AG04449 (cell line): ENCODE measurements at regions of chr3 and their contacts with region 1.

Region 1: GRCh38 chr3:14508961-14509795 is 31.0 kb downstream of the GRIP2 start:
- DNase-seq: no peak
- H3K4me3 ChIP-seq: peak overlapping the region; percentile 12; the same call in 1 of the 2 replicates
- CTCF ChIP-seq: peak; percentile 91

Region 2: DNA sequence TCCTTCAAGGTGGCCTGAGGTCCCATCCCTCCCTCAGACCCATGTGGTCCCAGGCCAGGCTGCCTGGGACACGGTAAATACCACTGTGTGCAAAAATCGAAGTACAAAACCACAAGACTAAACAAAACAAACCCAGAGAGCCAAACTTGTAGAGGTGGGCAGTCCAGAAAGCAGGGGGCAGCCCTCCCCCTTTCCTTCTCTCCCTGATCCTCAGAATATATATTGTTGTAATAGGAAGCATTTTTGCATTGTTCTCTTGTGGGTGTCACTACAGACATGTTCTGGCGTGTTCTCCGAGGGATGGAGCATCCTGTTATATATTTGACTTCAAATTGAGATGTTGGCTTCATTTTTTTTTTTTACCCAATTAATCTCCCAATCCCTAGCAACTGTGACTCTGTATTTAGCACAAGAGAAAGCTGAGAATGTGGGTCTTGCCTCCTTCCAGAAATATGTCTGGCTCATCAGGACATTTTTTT is 20.6 kb before region 1 on chr3:
- CTCF ChIA-PET with region 1: interaction called, 17 read pairs
- POLR2A ChIA-PET with region 1: interaction called, 3 read pairs
- DNase-seq: no peak
- H3K4me3 ChIP-seq: no peak overlapping the region
- CTCF ChIP-seq: no peak

Region 3: GRCh38 chr3:14497321-14497720 is 11.9 kb before region 1 on chr3:
- CTCF ChIA-PET with region 1: interaction called, 71 read pairs
- POLR2A ChIA-PET with region 1: interaction called, 3 read pairs
- DNase-seq: no peak
- H3K4me3 ChIP-seq: no peak overlapping the region
- CTCF ChIP-seq: no peak

Region 4: DNA sequence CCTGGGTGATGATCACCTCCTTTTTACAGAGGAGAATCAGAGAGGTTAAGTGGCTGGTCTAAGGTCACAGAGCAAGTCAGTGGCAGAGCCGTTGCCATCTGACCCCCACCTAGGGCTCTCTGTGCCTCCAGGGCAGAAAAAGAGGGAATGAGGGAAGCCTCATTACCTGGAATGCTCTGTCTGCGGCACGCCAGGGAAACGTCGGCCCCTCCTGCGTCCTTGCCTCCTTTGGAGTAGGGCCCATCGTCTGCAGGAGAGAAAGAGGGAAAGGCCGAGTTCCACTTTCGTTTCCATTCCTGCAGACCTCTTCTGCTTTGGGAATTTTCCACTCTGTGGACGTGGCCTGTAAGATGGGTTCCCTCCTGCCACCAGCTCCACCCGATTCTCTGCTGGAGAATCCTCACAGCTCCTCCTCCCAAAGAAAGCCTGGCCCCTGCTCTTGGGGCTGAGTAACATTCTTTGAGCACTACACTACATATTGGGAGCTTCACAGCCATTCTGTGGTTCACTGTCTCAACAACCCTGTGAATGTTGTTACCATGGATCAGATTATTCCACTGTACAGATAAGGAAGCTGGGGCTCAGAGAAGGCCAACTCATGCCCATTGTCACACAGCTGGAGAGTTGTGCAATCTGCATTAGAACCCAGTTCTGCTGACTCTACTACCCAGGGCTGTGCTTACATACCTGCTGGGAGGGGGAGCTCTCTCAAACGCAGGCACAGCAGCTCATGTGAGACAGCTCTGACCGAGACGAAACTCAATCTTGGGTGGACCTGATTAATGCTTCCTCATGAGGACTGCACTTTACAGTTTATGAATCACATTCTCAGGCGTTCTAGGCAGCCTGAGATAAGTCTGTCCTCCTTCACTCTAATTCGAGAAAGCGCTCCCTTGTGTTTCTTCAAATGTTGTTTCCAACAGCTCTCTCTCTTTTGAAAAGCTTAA is 16.8 kb after region 1 on chr3:
- CTCF ChIA-PET with region 1: interaction called, 167 read pairs
- POLR2A ChIA-PET with region 1: no interaction called
- DNase-seq: peak; percentile 10
- H3K4me3 ChIP-seq: no peak overlapping the region
- CTCF ChIP-seq: no peak

Region 5: GRCh38 chr3:14537590-14538447 is 28.6 kb after region 1 on chr3:
- CTCF ChIA-PET with region 1: interaction called, 14 read pairs
- POLR2A ChIA-PET with region 1: no interaction called
- DNase-seq: no peak
- H3K4me3 ChIP-seq: no peak overlapping the region
- CTCF ChIP-seq: no peak

Region 6: DNA sequence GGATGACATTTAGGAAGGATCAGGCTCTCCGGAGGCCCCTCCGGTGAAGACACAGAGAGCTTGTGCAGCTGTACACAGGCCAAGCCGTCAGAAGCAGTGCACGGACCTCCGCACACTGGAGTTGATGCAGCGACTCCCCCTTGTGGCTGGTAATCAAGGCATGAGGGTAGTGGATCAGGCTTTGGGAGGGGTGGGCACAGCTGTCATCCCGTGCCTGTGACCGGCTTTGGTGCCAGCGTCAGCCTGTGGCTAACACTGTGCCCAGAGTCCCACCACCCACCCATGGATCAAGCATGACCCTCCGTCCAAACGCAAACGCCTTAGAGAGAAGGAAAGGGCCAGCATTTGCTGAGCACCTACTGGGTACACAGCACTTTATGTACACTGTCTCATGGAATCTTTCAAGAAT is 39.1 kb after region 1 on chr3:
- CTCF ChIA-PET with region 1: interaction called, 81 read pairs
- POLR2A ChIA-PET with region 1: no interaction called
- DNase-seq: no peak
- H3K4me3 ChIP-seq: no peak overlapping the region
- CTCF ChIP-seq: peak; percentile 86

Region 7: DNA sequence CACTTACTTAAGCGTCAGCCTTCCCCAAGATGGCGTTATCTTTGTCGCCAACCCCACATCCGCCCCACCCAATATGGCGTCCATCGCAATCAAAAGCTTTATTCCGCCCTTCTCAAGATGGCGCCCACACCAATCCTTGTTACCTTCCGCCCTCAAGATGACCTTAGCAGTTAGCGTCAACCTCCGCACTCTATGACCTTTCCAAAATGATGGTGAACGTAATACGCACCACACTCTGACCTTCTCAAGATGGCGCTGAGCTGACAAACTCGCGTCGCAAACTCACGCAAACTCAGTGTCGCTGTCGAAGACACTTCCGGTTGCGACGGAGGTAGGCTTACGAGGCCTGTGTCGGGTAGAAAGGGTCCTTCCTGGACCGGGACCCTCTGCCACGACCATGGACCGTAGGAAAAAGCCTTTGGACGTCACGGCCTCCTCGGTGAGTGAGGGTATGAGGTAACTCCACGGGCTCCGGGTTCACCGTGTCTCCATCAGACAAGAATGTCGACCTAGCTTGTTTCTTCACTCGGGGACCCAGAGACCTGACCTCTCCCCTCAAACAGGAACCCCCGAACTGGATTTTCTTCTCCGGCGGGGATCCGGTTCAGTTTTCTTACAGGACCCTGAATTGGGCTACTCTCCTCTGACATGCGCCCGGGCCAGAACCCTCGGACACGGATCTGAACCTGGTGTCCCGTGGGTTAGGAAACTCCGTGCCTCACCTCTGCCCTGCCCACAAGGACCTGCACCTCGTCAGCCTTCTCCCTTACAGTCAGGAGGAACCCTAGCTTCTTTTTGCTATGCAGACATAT is 142.5 kb after region 1 on chr3 and contains the start of gene CCDC174:
- CTCF ChIA-PET with region 1: interaction called, 25 read pairs
- POLR2A ChIA-PET with region 1: no interaction called
- DNase-seq: peak; percentile 97
- H3K4me3 ChIP-seq: peak within 1 kb of the TSS; percentile 90
- CTCF ChIP-seq: no peak

Region 8: GRCh38 chr3:14847613-14848541 is 338.7 kb after region 1 on chr3:
- CTCF ChIA-PET with region 1: no interaction called
- POLR2A ChIA-PET with region 1: no interaction called
- DNase-seq: no peak
- H3K4me3 ChIP-seq: no peak overlapping the region
- CTCF ChIP-seq: no peak